ENCODE measurements at regions of chr6 and their contacts with region 1.

Region 1: DNA sequence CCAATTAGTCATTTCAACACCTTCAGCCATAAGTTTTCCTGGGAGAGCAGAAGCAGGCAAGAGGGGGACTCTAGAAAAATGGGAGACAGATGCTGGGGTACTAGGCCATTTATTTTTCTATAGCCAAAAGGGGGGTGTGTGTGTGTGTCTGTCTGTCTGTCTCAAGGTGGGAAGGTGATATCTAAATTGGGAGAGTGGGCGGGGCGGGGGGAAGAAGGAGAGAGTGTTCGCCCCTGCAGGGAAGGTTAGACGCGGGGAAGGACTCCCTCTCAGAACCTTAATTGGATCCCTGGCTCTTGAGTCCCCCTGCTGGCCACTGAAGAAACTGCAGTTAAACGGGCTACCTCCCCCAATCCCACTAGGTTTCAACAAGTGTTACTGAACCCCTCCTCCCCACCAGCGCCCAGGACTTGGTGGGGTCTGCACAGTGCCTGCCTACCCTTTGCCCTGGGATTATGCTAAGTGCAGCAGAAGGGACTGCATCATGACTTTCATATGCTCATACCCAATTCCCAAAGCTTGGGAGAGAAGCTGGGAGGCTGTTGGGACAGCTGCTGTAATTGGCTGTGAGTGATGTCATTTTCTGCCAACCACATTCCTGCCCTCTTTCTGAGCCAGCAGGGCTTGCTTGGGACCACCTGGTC is 45.8 kb downstream of the FOXP4 start:
- DNase-seq: peak; percentile 60
- H3K4me3 Mint-ChIP-seq: no peak overlapping the region
- H3K27ac Mint-ChIP-seq: no peak overlapping the region
- H3K4me1 Mint-ChIP-seq: no peaks in the 10 kb centered on the region
- H3K27me3 Mint-ChIP-seq: no peaks in the 10 kb centered on the region

Region 2: GRCh38 chr6:41463062-41463930 is 128.7 kb before region 1 on chr6:
- intact Hi-C with region 1: loop called (anchors 1 kb)
- DNase-seq: no peak
- H3K4me3 Mint-ChIP-seq: no peak overlapping the region
- H3K27ac Mint-ChIP-seq: no peak overlapping the region
- H3K4me1 Mint-ChIP-seq: no peaks in the 10 kb centered on the region
- H3K27me3 Mint-ChIP-seq: peaks cover 53% of the 10 kb centered on the region

Region 3: GRCh38 chr6:41505122-41506049 is 86.6 kb before region 1 on chr6:
- intact Hi-C with region 1: loop called (anchors 2 kb)
- DNase-seq: no peak
- H3K4me3 Mint-ChIP-seq: peak overlapping the region; percentile 52
- H3K27ac Mint-ChIP-seq: no peak overlapping the region
- H3K4me1 Mint-ChIP-seq: peaks cover 6% of the 10 kb centered on the region
- H3K27me3 Mint-ChIP-seq: peaks cover 72% of the 10 kb centered on the region

Region 4: DNA sequence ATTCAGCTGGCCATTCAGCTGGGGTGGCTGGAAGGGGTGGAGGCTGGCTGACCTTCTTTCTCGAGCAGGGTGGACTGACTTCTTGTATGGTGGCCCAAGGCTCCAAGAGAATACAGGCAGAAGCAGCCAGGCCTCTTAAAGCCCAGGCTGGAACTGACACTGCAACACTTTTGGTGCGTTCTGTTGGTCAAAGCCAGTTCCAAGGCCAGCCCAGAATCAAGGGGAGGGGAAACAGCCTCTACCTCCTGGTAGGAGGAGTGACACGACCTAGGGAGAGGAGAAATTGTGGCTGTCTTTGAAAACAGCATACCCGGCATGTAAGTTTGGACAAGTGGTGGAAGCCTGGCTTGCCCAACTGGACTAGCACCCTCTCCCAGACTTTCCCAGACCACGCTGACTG is 26.1 kb after region 1 on chr6:
- intact Hi-C with region 1: no loop called
- DNase-seq: no peak
- H3K4me3 Mint-ChIP-seq: no peak overlapping the region
- H3K27ac Mint-ChIP-seq: no peak overlapping the region
- H3K4me1 Mint-ChIP-seq: no peaks in the 10 kb centered on the region
- H3K27me3 Mint-ChIP-seq: peaks cover 13% of the 10 kb centered on the region

Measured in activated T-helper 1 cell treated with anti-CD3 and anti-CD28 coated beads, Interleukin-12 subunit alpha, Interleukin-12 subunit beta, Interleukin-2, Interleukin-4 antibody, amounts not matched to agents 30 ng/mL and 10 ng/mL and 1 ng/mL, durations not matched to agents 14 hours and 24 hours and 36 hours (primary cell).